ENCODE measurements at regions of chr10 and their contacts with region 1.

Region 1: GRCh38 chr10:49592726-49593563 is 17.2 kb upstream of the SLC18A3 start:
- DNase-seq: peak in 3 of 5 donors; percentile 41 to 48 (median 46)
- ATAC-seq: peak; percentile 62 to 79 (median 70)
- H3K4me3 ChIP-seq: no peak overlapping the region
- H3K27ac ChIP-seq: no peak overlapping the region
- H3K4me1 ChIP-seq: no peaks in the 10 kb centered on the region
- H3K27me3 ChIP-seq: peaks cover 0 to 26% (median 0%) of the 10 kb centered on the region in 9 donors
- CTCF ChIP-seq: peak; percentile 74 to 92 (median 84)
- POLR2A ChIP-seq: no peak

Region 2: GRCh38 chr10:49552249-49552672 is 40.7 kb before region 1 on chr10:
- intact Hi-C with region 1: no loop called
- DNase-seq: no peak
- ATAC-seq: peak in 1 of 4 donors; percentile 29
- H3K4me3 ChIP-seq: no peak overlapping the region
- H3K27ac ChIP-seq: no peak overlapping the region
- H3K4me1 ChIP-seq: peaks cover 0 to 6% (median 0%) of the 10 kb centered on the region in 12 donors
- H3K27me3 ChIP-seq: peaks cover 0 to 4% (median 0%) of the 10 kb centered on the region in 9 donors
- CTCF ChIP-seq: no peak
- POLR2A ChIP-seq: no peak

Region 3: GRCh38 chr10:49562893-49563292 is 30.1 kb before region 1 on chr10:
- intact Hi-C with region 1: no loop called
- DNase-seq: no peak
- ATAC-seq: no peak
- H3K4me3 ChIP-seq: no peak overlapping the region
- H3K27ac ChIP-seq: no peak overlapping the region
- H3K4me1 ChIP-seq: no peaks in the 10 kb centered on the region
- H3K27me3 ChIP-seq: peaks cover 0 to 10% (median 0%) of the 10 kb centered on the region in 9 donors
- CTCF ChIP-seq: no peak
- POLR2A ChIP-seq: no peak

Region 4: DNA sequence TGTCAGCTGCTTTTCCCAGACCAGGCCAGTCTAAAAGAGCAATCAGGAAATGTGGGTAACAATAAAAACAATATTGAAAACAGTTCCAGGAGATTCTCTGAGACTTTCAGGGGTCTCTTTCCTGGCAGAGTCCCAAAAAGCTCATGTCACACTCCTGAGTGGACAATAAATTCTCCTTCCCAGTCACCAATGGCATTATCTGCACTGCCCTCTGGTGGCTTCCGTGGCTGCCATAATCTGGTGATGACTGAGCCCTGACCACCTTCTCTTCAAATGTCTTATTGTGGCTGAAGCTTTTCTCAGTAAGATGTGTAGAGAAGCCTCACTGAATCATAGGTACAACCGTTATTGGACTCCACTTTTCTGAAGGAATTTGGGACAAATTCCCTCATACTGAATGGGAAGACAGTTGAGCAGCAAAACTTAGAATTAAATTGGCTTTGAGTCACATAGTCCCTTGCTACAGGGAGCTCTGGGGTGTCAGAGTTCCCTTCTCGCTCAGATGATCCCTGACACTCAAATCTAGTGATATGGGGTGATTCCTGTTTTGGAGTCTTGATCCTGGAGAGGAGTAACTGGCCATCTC is 682.8 kb after region 1 on chr10:
- intact Hi-C with region 1: loop called in 1 of 10 experiments (anchors 10 kb)
- DNase-seq: peak in 3 of 5 donors; percentile 22 to 40 (median 28)
- ATAC-seq: peak in 2 of 4 donors; percentile 52 to 57
- H3K4me3 ChIP-seq: no peak overlapping the region
- H3K27ac ChIP-seq: no peak overlapping the region
- H3K4me1 ChIP-seq: no peaks in the 10 kb centered on the region
- H3K27me3 ChIP-seq: peaks cover 0 to 8% (median 0%) of the 10 kb centered on the region in 9 donors
- CTCF ChIP-seq: peak; percentile 21 to 66 (median 52)
- POLR2A ChIP-seq: no peak